PC-9 (cell line): ENCODE measurements at regions of chr6 and their contacts with region 1.

Region 1: DNA sequence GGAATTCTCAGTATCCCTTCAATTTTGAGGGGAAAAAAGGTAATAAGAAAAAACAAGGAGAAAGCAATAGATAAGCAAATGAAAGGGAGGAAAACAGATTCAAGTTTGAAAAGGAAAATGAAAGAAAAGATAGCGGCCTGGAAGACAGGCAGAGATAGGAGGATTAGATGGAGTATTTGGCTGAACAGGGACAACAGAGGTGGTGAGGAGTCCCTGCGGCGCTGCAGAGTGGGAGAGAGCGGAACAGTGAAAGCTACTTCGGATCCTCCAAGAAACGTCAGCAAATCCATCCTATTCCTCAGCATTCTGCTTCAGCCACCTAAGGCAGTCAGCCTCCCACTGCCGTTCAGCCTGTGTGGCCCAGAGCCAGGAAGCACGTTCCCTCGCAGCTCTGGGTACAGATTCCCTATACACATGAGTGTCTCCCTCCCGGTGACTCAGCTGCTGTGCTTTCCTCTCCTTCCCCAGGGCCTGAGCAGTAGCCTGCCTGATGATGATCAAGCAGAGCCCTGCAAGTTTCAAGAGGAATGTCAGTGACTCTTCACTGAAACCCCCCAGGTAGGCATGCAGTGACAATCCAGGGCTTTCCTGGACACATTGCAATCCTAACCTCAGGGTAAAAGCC is 43.4 kb upstream of the CDYL start:
- DNase-seq: peak; percentile 84
- H3K4me3 ChIP-seq: peak overlapping the region; percentile 12; the same call in 1 of the 2 replicates
- H3K27ac ChIP-seq: peak overlapping the region; percentile 91
- H3K4me1 ChIP-seq: peaks cover 38% of the 10 kb centered on the region
- H3K27me3 ChIP-seq: no peaks in the 10 kb centered on the region
- CTCF ChIP-seq: no peak

Region 2: GRCh38 chr6:4672781-4673180 is 60.0 kb before region 1 on chr6:
- CTCF ChIA-PET with region 1: no interaction called
- POLR2A ChIA-PET with region 1: no interaction called
- intact Hi-C with region 1: no loop called
- DNase-seq: no peak
- H3K4me3 ChIP-seq: no peak overlapping the region
- H3K27ac ChIP-seq: no peak overlapping the region
- H3K4me1 ChIP-seq: no peaks in the 10 kb centered on the region
- H3K27me3 ChIP-seq: no peaks in the 10 kb centered on the region
- CTCF ChIP-seq: no peak

Region 3: DNA sequence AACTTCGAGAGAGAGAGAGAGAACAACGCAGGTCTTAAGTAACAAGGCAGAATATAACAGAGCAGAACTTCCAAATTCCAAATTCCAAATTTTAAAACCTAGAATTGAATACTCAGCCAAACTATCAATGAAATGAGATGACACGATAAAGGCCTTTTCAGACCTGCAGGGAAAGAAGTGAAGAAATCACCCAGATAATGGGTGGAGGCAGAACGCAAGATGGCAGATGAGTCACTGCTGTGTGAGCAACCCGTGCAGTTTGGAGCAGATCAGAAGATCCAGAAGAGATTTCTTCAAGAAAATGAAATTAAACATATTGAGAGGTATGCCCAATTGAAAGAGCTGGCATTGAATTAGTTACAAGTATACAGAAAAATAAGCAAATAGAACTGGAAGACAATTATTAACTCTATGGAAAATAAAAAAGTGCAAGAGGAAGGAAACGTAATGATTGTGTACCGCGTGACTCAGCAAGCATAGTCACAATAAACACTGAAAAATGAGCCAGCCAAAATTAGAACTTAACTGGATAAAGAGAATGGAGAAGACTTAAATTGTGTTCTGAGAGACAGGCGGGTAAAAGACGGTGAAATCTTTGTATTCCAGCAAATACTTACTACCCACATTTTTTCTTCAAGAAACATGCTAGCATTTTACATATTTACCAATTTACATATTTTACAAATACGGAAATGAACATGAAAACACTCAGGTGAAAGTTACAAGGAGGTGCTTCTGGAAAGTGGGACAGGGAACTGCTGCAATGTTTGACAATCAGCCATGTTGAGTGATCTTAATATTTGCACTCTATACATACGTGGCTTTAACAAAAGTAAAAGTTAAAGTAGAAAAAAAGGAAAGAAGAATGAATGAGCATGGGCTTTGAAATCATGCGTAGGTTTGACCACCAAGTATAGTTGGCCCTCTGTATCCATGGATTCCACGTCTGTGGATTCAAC is 44.5 kb before region 1 on chr6:
- CTCF ChIA-PET with region 1: no interaction called
- POLR2A ChIA-PET with region 1: no interaction called
- intact Hi-C with region 1: loop called (anchors 2 kb)
- DNase-seq: peak; percentile 48 to 69
- H3K4me3 ChIP-seq: peak overlapping the region; percentile 54
- H3K27ac ChIP-seq: peak overlapping the region; percentile 90
- H3K4me1 ChIP-seq: peaks cover 13% of the 10 kb centered on the region
- H3K27me3 ChIP-seq: no peaks in the 10 kb centered on the region
- CTCF ChIP-seq: no peak

Region 4: GRCh38 chr6:4707011-4707410 is 25.8 kb before region 1 on chr6:
- CTCF ChIA-PET with region 1: no interaction called
- POLR2A ChIA-PET with region 1: no interaction called
- intact Hi-C with region 1: loop called (anchors 1 kb)
- DNase-seq: peak; percentile 56 to 88
- H3K4me3 ChIP-seq: no peak overlapping the region
- H3K27ac ChIP-seq: peak overlapping the region; percentile 34; the same call in 1 of the 2 replicates
- H3K4me1 ChIP-seq: peaks cover 11% of the 10 kb centered on the region
- H3K27me3 ChIP-seq: no peaks in the 10 kb centered on the region
- CTCF ChIP-seq: no peak

Region 5: DNA sequence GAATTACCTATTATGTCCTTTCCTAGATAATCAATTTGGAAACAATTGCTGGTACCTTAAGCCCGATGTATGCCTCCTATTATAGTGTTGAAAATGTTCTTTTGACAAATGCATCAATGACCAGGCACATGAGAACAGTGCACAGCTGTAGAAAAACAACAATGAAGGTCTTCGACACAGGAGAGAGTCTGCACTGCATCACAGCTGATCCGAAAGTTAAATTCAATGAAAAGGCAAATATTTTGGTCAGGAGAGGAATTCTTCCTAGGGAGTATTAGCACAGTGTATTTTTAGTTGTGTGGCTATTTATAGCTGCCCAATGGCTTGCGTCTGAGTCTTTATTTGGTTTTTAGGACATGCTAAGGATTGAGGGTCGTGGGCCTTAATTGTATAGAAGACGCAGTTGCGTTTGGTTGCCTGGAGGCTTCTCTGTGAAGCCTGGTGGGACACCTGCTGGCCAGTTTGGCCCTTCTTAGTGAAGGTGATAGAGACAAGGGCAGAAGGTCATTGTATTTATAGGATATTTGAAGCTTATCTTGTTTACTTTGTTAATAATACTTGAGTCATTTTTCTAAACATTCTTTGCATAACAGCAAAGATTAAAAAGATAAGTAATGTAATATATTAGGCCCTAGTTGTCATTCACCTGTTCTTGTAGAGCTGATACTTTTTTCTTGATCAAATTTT is 115.7 kb after region 1 on chr6:
- CTCF ChIA-PET with region 1: no interaction called
- POLR2A ChIA-PET with region 1: no interaction called
- intact Hi-C with region 1: loop called (anchors 1 kb)
- DNase-seq: peak; percentile 38 to 74
- H3K4me3 ChIP-seq: no peak overlapping the region
- H3K27ac ChIP-seq: no peak overlapping the region
- H3K4me1 ChIP-seq: peaks cover 14% of the 10 kb centered on the region
- H3K27me3 ChIP-seq: no peaks in the 10 kb centered on the region
- CTCF ChIP-seq: peak; percentile 64